Colonic mucosa (tissue), 4 donors: ENCODE measurements at regions of chrX and their contacts with region 1.

Region 1: GRCh38 chrX:73076838-73077237 is 2.5 kb downstream of the PABPC1L2A start:
- DNase-seq: no peak
- H3K4me3 ChIP-seq: no peak overlapping the region
- H3K27ac ChIP-seq: no peak overlapping the region
- H3K4me1 ChIP-seq: no peaks in the 10 kb centered on the region
- H3K27me3 ChIP-seq: peaks cover 7% of the 10 kb centered on the region
- CTCF ChIP-seq: no peak

Region 2: GRCh38 chrX:72676465-72676864 is 400.4 kb before region 1 on chrX:
- intact Hi-C with region 1: no loop called
- DNase-seq: no peak
- H3K4me3 ChIP-seq: no peak overlapping the region
- H3K27ac ChIP-seq: no peak overlapping the region
- H3K4me1 ChIP-seq: no peaks in the 10 kb centered on the region
- H3K27me3 ChIP-seq: no peaks in the 10 kb centered on the region
- CTCF ChIP-seq: no peak

Region 3: GRCh38 chrX:73262992-73263391 is 186.2 kb after region 1 on chrX:
- intact Hi-C with region 1: loop called (anchors 10 kb)
- DNase-seq: no peak
- H3K4me3 ChIP-seq: no peak overlapping the region
- H3K27ac ChIP-seq: no peak overlapping the region
- H3K4me1 ChIP-seq: no peaks in the 10 kb centered on the region
- H3K27me3 ChIP-seq: no peaks in the 10 kb centered on the region
- CTCF ChIP-seq: no peak

Region 4: DNA sequence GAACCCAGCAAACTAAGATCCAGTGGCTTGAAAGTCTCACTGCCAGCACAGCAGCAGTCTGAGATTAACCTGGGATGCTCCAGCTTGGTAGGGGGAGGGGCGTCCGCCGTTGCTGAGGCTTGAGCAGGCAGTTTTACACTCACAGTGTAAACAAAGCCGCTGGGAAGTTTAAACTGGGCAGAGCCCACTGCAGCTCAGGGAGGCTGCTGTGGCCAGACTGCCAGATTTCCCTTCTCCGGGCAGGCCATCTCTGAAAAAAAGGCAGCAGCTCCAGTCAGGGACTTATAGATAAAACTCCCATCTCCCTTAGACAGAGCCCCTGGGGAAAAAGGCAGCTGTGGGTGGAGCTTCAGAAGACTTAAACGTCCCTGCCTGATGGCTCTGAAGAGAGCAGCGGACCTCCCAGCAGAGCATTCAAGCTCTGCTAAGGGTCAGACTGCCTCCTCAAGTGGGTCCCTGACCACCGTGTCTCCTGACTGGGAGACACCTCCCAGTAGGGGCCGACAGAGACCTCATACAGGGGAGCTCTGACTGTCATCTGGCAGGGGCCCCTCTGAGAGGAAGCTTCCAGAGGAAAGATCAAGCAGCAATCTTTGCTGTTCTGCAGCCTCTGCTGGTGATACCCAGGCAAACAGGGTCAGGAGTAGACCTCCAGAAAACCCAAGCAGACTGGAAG is 324.9 kb after region 1 on chrX:
- intact Hi-C with region 1: no loop called
- DNase-seq: no peak
- H3K4me3 ChIP-seq: no peak overlapping the region
- H3K27ac ChIP-seq: no peak overlapping the region
- H3K4me1 ChIP-seq: no peaks in the 10 kb centered on the region
- H3K27me3 ChIP-seq: no peaks in the 10 kb centered on the region
- CTCF ChIP-seq: no peak